Activated T-helper 2 cell treated with anti-CD3 and anti-CD28 coated beads, Interferon-gamma antibody, Interleukin-2, Interleukin-4, amounts not matched to agents 10 μg/mL and 5 μg/mL and 100 μg/mL, durations not matched to agents 14 hours and 24 hours and 36 hours (primary cell): ENCODE measurements at regions of chr7 and their contacts with region 1.

Region 1: GRCh38 chr7:17952387-17952786 is 12.1 kb upstream of the SNX13 start:
- DNase-seq: peak; percentile 28
- H3K4me3 Mint-ChIP-seq: peak overlapping the region; percentile 44
- H3K27ac Mint-ChIP-seq: no peak overlapping the region
- H3K4me1 Mint-ChIP-seq: peaks cover 19% of the 10 kb centered on the region
- H3K27me3 Mint-ChIP-seq: peaks cover 17% of the 10 kb centered on the region

Region 2: DNA sequence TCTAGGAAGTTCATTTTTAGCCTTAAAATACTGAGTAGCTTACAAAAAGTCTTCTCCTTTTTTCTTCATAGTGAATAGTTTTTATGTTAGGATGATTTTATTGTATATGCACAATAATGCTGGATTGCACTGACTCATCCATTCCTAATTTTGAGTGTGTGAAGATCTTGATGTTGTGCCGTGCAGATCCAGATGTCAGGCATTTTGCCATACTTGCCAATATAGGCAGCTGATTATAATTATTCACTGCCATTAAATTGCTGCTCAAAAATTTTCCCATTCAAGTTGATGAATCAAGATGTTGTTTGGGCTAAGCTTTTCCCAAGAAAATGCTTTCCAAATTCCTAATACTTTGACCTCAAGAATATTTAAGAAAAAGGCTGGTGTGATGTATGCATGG is 435.6 kb before region 1 on chr7:
- intact Hi-C with region 1: no loop called
- DNase-seq: no peak
- H3K4me3 Mint-ChIP-seq: no peak overlapping the region
- H3K27ac Mint-ChIP-seq: no peak overlapping the region
- H3K4me1 Mint-ChIP-seq: peaks cover 5% of the 10 kb centered on the region
- H3K27me3 Mint-ChIP-seq: peaks cover 4% of the 10 kb centered on the region

Region 3: DNA sequence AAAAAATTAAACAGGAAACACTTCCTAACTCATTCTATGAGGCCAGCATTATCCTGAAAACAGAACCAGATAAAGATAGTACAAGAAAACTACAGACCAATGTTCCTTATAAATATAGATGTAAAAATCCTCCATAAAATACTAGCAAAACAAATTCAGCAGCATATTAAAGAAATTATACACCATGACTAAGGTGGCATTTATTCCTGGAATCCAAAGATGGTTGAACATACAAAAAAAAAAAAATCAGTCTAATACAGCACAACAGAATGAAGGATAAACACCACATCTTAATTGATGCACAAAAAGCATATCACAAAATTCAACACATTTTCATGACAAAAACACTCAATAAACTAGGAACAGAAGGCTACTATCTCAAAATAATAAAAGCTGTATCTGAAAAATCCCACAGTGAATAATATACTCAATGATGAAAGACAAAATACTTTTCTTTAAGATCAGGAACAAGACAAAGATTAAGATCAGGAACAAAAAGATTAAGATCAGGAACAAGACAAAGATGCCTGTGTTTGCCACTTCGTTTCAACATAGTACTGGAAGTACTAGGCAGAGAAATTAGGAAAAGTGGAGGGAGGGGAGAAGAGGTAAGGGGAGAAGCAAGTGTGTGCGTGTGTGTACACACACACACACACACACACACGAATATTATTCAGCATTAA is 107.7 kb before region 1 on chr7:
- intact Hi-C with region 1: loop called (anchors 5 kb)
- DNase-seq: no peak
- H3K4me3 Mint-ChIP-seq: no peak overlapping the region
- H3K27ac Mint-ChIP-seq: no peak overlapping the region
- H3K4me1 Mint-ChIP-seq: peaks cover 41% of the 10 kb centered on the region
- H3K27me3 Mint-ChIP-seq: no peaks in the 10 kb centered on the region

Region 4: GRCh38 chr7:17934094-17934493 is 18.3 kb before region 1 on chr7:
- intact Hi-C with region 1: loop called (anchors 1 kb)
- DNase-seq: no peak
- H3K4me3 Mint-ChIP-seq: no peak overlapping the region
- H3K27ac Mint-ChIP-seq: no peak overlapping the region
- H3K4me1 Mint-ChIP-seq: peaks cover 54% of the 10 kb centered on the region
- H3K27me3 Mint-ChIP-seq: peaks cover 7% of the 10 kb centered on the region